Heart left ventricle (tissue), 16 donors: ENCODE measurements at regions of chr9 and their contacts with region 1.

Region 1: GRCh38 chr9:86948074-86948929 is 996 bp upstream of the GAS1 start:
- DNase-seq: peak; percentile 76 to 88 (median 81)
- ATAC-seq: peak; percentile 65 to 84 (median 78)
- H3K4me3 ChIP-seq: peak overlapping the region; percentile 51 to 92 (median 80)
- H3K27ac ChIP-seq: peak overlapping the region; percentile 48 to 95 (median 92)
- H3K4me1 ChIP-seq: peaks cover 0 to 34% (median 6%) of the 10 kb centered on the region in 12 donors
- H3K27me3 ChIP-seq: peaks cover 0 to 28% (median 0%) of the 10 kb centered on the region in 9 donors
- CTCF ChIP-seq: peak; percentile 64 to 96 (median 84)
- POLR2A ChIP-seq: peak in 1 of 2 donors; percentile 29

Region 2: DNA sequence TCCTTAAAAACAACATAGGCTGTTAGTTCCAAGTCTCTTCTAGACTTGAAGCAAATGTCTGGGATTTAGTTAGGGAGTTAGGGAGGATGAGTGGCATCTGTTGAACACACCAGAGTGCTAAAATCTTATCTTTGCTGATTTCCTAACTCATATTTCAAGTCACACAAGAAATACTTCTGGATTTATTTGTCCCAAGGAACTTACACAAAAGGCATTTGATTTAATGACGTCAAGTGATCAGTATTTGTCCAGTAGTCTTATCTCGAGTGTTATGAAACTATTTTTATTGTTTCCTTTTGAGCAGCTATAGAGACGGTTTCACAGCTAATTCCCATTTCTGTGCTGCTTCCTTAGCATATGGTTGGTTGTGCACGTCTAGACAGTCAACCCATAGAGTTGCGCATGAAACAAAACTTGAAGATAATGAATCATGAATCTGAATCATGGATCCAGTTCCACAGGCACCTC is 453.6 kb before region 1 on chr9:
- intact Hi-C with region 1: loop called in 8 of 10 experiments (anchors 5 to 10 kb)
- DNase-seq: no peak
- ATAC-seq: peak in 2 of 4 donors; percentile 53 to 87
- H3K4me3 ChIP-seq: no peak overlapping the region
- H3K27ac ChIP-seq: peak overlapping the region in 2 of 12 donors; percentile 20 to 32
- H3K4me1 ChIP-seq: peaks cover 0 to 8% (median 0%) of the 10 kb centered on the region in 12 donors
- H3K27me3 ChIP-seq: peaks cover 0 to 3% (median 0%) of the 10 kb centered on the region in 9 donors
- CTCF ChIP-seq: no peak
- POLR2A ChIP-seq: no peak

Region 3: DNA sequence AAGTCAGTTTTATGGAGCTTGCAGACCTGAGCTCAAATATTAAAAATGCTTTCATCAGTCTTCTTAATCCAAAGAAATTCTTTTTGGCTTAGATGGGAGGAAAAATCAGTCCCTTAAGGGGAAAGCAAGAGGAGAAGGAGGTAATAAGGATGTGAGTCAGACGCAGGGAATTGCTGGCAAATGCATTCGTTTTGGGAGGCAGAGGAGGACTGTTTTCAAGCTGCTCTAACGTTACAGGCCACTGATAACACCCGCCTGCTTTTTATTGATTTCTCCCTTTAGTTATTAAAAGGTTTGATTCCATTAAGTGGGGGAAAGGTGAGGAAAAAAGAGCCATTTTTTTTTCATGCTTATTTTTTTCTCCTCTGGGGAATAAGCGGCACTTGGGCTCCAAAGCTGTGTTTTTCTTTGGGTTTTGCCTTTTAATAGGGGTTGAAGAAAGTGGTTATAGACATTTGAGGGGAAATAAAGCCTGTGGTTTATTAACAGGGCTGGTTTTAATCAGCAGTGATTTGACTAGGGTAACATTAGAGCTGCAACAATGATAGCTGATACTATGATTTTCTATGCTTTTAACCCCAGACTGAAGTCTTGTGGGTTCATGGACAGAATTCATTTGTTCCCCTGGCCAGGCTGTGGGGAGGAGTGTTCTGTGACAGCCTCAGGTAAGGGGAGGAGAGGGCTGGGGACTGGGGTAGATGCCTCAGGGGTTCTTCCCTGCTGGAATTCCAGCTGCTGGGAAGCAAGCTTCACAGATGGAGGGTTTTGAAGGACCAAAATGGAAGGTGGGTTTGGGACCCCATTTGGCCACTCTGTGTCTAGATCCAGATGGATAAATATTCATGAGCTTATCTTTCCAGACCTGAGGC is 226.2 kb before region 1 on chr9:
- intact Hi-C with region 1: loop called in 1 of 10 experiments (anchors 10 kb)
- DNase-seq: peak in 4 of 5 donors; percentile 45 to 59 (median 56)
- ATAC-seq: peak; percentile 29 to 91 (median 86)
- H3K4me3 ChIP-seq: no peak overlapping the region
- H3K27ac ChIP-seq: peak overlapping the region in 10 of 12 donors; percentile 31 to 87 (median 62)
- H3K4me1 ChIP-seq: peaks cover 0 to 22% (median 0%) of the 10 kb centered on the region in 12 donors
- H3K27me3 ChIP-seq: no peaks in the 10 kb centered on the region
- CTCF ChIP-seq: no peak
- POLR2A ChIP-seq: no peak

Region 4: GRCh38 chr9:87080512-87081264 is 132.4 kb after region 1 on chr9:
- intact Hi-C with region 1: loop called in 3 of 10 experiments (anchors 5 to 10 kb)
- DNase-seq: no peak
- ATAC-seq: peak; percentile 42 to 85 (median 63)
- H3K4me3 ChIP-seq: no peak overlapping the region
- H3K27ac ChIP-seq: peak overlapping the region in 2 of 12 donors; percentile 33 to 44
- H3K4me1 ChIP-seq: peaks cover 0 to 10% (median 4%) of the 10 kb centered on the region in 12 donors
- H3K27me3 ChIP-seq: no peaks in the 10 kb centered on the region
- CTCF ChIP-seq: peak in 2 of 12 donors; percentile 8 to 13
- POLR2A ChIP-seq: no peak

Region 5: DNA sequence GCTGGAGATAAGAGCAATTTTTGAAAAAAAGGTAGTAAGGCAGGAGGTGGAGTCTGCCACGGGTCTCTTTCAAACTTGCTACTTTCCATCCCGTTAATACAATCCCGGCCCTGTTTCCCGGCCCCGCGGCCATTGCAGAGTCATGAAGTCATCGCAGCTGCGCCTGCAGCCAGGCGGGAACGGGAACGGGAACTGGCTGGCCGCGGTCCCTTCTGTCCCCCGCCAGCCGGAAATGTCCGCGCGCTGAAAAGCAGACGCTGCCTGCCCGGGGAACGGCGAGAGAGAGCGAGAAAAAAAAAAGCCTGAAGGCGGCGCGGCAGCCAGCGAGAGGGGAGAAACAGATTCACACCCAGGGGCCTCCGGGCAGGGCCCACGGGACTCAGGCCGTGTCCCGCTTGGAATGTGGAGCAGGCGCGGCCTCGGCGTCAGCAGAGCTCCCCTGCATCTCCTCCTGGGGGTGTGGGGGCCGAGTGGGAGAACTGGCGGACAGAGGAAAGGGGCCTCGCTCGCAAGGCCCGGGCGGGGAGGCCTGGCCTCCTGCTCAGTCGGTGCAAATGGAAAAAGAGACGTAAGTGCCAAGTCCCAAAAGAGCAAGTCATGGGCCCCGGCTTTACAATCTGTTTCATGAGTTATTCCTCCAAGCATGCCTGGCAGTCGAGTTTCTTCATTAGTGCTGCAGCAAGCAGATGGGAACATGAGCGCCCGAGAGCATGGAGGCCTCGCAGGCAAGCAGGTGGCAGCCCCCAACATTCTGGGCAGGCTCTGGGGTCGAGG is 200.2 kb after region 1 on chr9:
- intact Hi-C with region 1: loop called in 6 of 10 experiments (anchors 2 to 10 kb)
- DNase-seq: peak; percentile 89 to 92 (median 89)
- ATAC-seq: peak; percentile 86 to 97 (median 96)
- H3K4me3 ChIP-seq: peak overlapping the region in 11 of 12 donors; percentile 13 to 53 (median 47)
- H3K27ac ChIP-seq: peak overlapping the region; percentile 66 to 92 (median 84)
- H3K4me1 ChIP-seq: peaks cover 0 to 21% (median 11%) of the 10 kb centered on the region in 12 donors
- H3K27me3 ChIP-seq: peaks cover 0 to 14% (median 0%) of the 10 kb centered on the region in 9 donors
- CTCF ChIP-seq: peak in 7 of 12 donors; percentile 6 to 49 (median 29)
- POLR2A ChIP-seq: no peak

Region 6: DNA sequence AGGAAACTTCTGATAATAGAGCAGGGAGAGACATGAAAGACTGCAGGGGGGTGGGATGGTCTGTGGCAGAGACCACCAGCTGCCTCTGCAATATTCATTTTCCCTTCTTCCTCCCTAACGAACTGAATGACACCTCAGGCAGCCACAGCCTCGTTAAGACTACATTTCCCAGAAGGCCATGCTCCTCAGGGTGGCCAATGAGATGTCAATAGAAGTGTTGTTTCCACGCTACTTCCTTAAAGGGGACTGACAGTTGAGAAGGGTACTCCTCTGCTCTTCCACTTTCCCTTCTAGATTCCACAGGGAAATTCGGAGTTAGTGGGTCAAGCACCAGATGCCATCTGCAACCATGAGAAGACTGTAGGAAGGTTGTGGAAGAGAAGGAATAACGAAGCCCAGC is 497.3 kb after region 1 on chr9:
- intact Hi-C with region 1: no loop called
- DNase-seq: peak in 4 of 5 donors; percentile 21 to 36 (median 26)
- ATAC-seq: peak in 3 of 4 donors; percentile 74 to 77 (median 77)
- H3K4me3 ChIP-seq: peak overlapping the region in 1 of 12 donors; percentile 28
- H3K27ac ChIP-seq: no peak overlapping the region
- H3K4me1 ChIP-seq: no peaks in the 10 kb centered on the region
- H3K27me3 ChIP-seq: no peaks in the 10 kb centered on the region
- CTCF ChIP-seq: no peak
- POLR2A ChIP-seq: no peak

Region 7: DNA sequence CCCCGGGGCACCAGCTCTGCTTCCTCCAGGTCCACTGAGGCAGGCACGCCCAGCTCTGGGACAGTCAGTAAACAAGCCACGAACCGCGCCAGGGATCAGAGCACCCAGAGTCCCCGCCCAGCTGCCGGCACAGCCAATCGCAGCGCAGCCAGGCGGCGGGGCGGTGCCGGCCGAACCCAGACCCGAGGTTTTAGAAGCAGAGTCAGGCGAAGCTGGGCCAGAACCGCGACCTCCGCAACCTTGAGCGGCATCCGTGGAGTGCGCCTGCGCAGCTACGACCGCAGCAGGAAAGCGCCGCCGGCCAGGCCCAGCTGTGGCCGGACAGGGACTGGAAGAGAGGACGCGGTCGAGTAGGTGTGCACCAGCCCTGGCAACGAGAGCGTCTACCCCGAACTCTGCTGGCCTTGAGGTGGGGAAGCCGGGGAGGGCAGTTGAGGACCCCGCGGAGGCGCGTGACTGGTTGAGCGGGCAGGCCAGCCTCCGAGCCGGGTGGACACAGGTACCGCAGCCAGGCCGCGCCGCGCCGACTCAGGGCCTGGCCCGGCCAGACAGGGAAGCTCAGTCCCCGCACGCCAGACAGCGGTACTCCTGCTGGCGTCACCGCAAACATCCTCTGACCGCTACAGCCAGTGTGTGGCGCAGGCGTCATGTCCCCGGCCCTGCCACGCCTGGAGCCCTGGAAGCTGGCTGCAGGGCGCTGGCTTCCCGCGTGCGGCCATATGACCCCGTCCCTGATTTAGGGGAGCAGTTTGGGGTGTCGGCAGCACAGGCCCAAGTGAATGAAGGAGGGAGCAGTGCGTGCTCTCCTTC is 777.8 kb after region 1 on chr9 and contains the start of gene CTSL:
- intact Hi-C with region 1: loop called in 1 of 10 experiments (anchors 5 kb)
- DNase-seq: peak; percentile 94 to 97 (median 95)
- ATAC-seq: peak; percentile 97 to 98 (median 98)
- H3K4me3 ChIP-seq: peak within 1 kb of the TSS; percentile 54 to 86 (median 74)
- H3K27ac ChIP-seq: peak within 1 kb of the TSS; percentile 85 to 100 (median 96)
- H3K4me1 ChIP-seq: peaks cover 0 to 76% (median 20%) of the 10 kb centered on the region in 12 donors
- H3K27me3 ChIP-seq: no peaks in the 10 kb centered on the region
- CTCF ChIP-seq: peak in 9 of 12 donors; percentile 8 to 45 (median 19)
- POLR2A ChIP-seq: peak; percentile 30 to 94
- total RNA-seq, gene CTSL: 95.3 to 382 (median 130) TPM